K562 (cell line): ENCODE measurements at regions of chr19 and their contacts with region 1.

Region 1: GRCh38 chr19:43668406-43669158 is 1.4 kb downstream of the PLAUR start:
- DNase-seq: peak; percentile 97 to 98 (median 98)
- ATAC-seq: peak; percentile 93
- H3K4me3 ChIP-seq: peak overlapping the region; percentile 55
- H3K27ac ChIP-seq: peak overlapping the region; percentile 53; the same call in 2 of the 3 replicates
- H3K4me1 ChIP-seq: peaks cover 20 to 40% of the 10 kb centered on the region in 2 experiments
- H3K27me3 ChIP-seq: no peaks in the 10 kb centered on the region
- CTCF ChIP-seq: no peak
- EP300 ChIP-seq: no peak
- POLR2A ChIP-seq: peak; percentile 67
- RAD21 ChIP-seq: no peak

Region 2: GRCh38 chr19:43532962-43533545 is 135.5 kb before region 1 on chr19 and contains the start of gene ZNF575:
- CTCF ChIA-PET with region 1: no interaction called
- POLR2A ChIA-PET with region 1: interaction called, 3 read pairs
- in situ Hi-C with region 1: no loop called
- intact Hi-C with region 1: loop called (anchors 10 kb)
- DNase-seq: peak; percentile 90 to 94 (median 91)
- ATAC-seq: peak; percentile 90
- H3K4me3 ChIP-seq: peak within 1 kb of the TSS; percentile 45
- H3K27ac ChIP-seq: peak within 1 kb of the TSS; percentile 59
- H3K4me1 ChIP-seq: peaks cover 7 to 35% of the 10 kb centered on the region in 2 experiments
- H3K27me3 ChIP-seq: no peaks in the 10 kb centered on the region
- CTCF ChIP-seq: no peak
- EP300 ChIP-seq: no peak
- POLR2A ChIP-seq: 0 out of 2 replicates have a peak, but pooled peaks have one; percentile 35
- RAD21 ChIP-seq: no peak
- polyA plus RNA-seq, gene ZNF575: not detected

Region 3: DNA sequence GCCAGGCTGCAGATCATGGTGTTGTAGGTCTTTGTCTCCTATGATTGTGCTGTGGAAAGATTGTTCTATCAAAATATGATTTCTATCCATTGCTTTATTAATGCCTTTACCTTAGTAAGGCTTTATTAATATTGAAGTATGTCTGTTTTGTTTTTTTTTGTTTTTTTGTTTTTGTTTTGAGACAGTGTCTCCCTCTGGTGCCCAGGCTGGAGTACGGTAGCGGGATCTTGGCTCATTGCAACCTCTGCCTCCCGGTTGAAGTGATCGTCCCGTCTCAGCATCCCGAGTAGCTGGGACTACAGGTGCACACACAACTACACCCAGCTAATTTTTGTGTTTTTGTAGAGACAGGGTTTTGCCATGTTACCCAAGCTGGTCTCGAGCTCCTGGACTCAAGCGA is 55.0 kb after region 1 on chr19:
- CTCF ChIA-PET with region 1: interaction called, 8 read pairs
- POLR2A ChIA-PET with region 1: interaction called, 4 read pairs
- in situ Hi-C with region 1: no loop called
- intact Hi-C with region 1: loop called (anchors 2 kb)
- DNase-seq: peak in 1 of 4 experiments; percentile 33
- ATAC-seq: peak; percentile 58
- H3K4me3 ChIP-seq: no peak overlapping the region
- H3K27ac ChIP-seq: no peak overlapping the region
- H3K4me1 ChIP-seq: peaks cover 0 to 16% of the 10 kb centered on the region in 2 experiments; a peak in 2 of 5 replicates
- H3K27me3 ChIP-seq: peaks cover 11 to 12% of the 10 kb centered on the region in 2 experiments; a peak in 4 of 5 replicates
- CTCF ChIP-seq: peak; percentile 42 to 67 (median 57)
- EP300 ChIP-seq: no peak
- POLR2A ChIP-seq: no peak
- RAD21 ChIP-seq: peak; percentile 43 to 56

Region 4: GRCh38 chr19:43784981-43785808 is 116.6 kb after region 1 on chr19:
- CTCF ChIA-PET with region 1: interaction called, 4 read pairs
- POLR2A ChIA-PET with region 1: no interaction called
- in situ Hi-C with region 1: no loop called
- intact Hi-C with region 1: loop called (anchors 5 kb)
- DNase-seq: peak; percentile 69 to 90 (median 73)
- ATAC-seq: peak; percentile 82
- H3K4me3 ChIP-seq: no peak overlapping the region
- H3K27ac ChIP-seq: peak overlapping the region; percentile 75
- H3K4me1 ChIP-seq: peaks cover 44 to 50% of the 10 kb centered on the region in 2 experiments
- H3K27me3 ChIP-seq: no peaks in the 10 kb centered on the region
- CTCF ChIP-seq: peak; percentile 97 to 99 (median 98)
- EP300 ChIP-seq: no peak; the same call in 1 of the 2 replicates
- POLR2A ChIP-seq: no peak
- RAD21 ChIP-seq: peak; percentile 95 to 98

Region 5: DNA sequence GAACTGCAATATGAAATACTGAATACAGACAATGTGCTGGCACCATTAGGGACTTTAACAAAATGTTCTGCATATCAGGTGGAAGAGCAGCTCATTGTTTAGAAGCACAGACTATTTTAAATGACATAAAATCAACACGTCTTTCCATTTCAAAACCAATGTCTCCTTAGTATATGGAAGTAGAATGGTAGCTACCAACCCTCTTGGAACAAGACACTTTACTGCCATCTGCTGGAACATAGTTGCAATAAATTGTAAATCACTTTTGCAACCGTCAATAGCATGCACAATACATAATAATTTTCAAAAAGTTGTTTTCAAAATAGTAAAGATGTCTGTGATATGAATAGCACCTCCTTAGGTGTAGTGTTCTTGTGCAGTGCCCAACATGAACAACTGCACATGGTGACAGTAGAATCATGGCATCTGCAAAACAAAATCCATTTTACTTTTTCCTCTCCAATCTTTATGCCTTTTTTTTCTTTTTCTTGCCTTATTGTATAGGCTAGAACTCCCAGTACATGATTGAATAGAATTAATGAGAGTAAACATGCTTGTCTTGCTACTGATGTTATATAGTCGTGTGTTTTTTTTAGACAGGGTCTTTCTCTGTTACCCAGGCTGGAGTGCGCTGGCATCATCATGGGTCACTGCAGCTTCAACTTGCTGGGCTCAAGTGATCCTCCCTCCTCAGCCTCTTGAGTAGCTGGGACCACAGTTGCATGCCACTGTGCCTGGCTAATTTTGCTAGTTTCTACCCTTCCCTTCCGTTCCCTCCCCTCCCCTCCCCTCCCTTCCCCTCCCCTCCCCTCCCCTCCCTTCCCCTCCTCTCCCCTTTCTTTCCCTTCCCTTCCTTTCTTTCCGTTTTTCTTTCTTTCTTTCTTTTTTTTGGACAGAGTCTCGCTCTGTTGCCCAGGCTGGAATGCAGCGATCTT is 141.4 kb after region 1 on chr19:
- CTCF ChIA-PET with region 1: no interaction called
- POLR2A ChIA-PET with region 1: interaction called, 4 read pairs
- in situ Hi-C with region 1: no loop called
- intact Hi-C with region 1: loop called (anchors 5 kb)
- DNase-seq: peak; percentile 38 to 71 (median 45)
- ATAC-seq: peak; percentile 85
- H3K4me3 ChIP-seq: no peak overlapping the region
- H3K27ac ChIP-seq: no peak overlapping the region
- H3K4me1 ChIP-seq: no peaks in the 10 kb centered on the region; a peak in 2 of 5 replicates
- H3K27me3 ChIP-seq: no peaks in the 10 kb centered on the region
- CTCF ChIP-seq: peak; percentile 49 to 80 (median 56); a peak in 5 of 6 replicates
- EP300 ChIP-seq: no peak
- POLR2A ChIP-seq: no peak
- RAD21 ChIP-seq: peak; percentile 62 to 85